ENCODE measurements at regions of chr17 and their contacts with region 1.

Region 1: GRCh38 chr17:55238179-55238930 is 26.4 kb upstream of the HLF start:
- DNase-seq: peak; percentile 85
- H3K4me3 Mint-ChIP-seq: peak overlapping the region; percentile 77
- H3K27ac Mint-ChIP-seq: no peak overlapping the region
- H3K4me1 Mint-ChIP-seq: peaks cover 9% of the 10 kb centered on the region
- H3K27me3 Mint-ChIP-seq: peaks cover 24% of the 10 kb centered on the region

Region 2: DNA sequence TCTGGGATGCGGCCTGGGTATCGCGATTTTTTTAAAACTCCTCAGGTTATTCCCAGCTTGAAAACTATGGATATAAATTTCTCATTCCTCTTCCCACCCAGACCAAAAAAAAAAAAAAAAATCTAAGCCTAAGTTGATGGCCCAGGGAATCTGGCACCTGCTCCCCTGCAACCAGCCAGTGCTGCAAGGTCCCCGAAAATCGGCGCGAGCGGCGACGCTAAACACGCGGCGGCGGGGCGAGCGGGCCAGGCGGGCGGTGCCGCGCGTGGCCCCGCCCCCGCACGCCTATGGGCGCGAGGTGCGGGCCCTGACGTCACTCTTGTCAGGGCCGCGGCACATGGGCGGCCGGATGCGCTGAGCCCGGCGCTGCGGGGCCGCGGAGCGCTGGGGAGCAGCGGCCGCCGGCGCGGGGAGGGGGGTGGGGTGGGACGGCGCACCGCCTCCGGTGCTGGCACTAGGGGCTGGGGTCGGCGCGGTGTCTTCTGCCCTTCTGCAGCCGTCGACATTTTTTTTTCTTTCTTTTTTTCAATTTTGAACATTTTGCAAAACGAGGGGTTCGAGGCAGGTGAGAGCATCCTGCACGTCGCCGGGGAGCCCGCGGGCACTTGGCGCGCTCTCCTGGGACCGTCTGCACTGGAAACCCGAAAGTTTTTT is 26.4 kb after region 1 on chr17 and contains the start of gene HLF:
- CTCF ChIA-PET with region 1: interaction called, 3 read pairs
- intact Hi-C with region 1: loop called (anchors 1 kb)
- DNase-seq: peak; percentile 68
- H3K4me3 Mint-ChIP-seq: peak within 1 kb of the TSS; percentile 48
- H3K27ac Mint-ChIP-seq: no peak within 1 kb of the TSS
- H3K4me1 Mint-ChIP-seq: peaks cover 13% of the 10 kb centered on the region
- H3K27me3 Mint-ChIP-seq: peaks cover 78% of the 10 kb centered on the region
- total RNA-seq, gene HLF: 0.79 to 0.86 TPM

Region 3: DNA sequence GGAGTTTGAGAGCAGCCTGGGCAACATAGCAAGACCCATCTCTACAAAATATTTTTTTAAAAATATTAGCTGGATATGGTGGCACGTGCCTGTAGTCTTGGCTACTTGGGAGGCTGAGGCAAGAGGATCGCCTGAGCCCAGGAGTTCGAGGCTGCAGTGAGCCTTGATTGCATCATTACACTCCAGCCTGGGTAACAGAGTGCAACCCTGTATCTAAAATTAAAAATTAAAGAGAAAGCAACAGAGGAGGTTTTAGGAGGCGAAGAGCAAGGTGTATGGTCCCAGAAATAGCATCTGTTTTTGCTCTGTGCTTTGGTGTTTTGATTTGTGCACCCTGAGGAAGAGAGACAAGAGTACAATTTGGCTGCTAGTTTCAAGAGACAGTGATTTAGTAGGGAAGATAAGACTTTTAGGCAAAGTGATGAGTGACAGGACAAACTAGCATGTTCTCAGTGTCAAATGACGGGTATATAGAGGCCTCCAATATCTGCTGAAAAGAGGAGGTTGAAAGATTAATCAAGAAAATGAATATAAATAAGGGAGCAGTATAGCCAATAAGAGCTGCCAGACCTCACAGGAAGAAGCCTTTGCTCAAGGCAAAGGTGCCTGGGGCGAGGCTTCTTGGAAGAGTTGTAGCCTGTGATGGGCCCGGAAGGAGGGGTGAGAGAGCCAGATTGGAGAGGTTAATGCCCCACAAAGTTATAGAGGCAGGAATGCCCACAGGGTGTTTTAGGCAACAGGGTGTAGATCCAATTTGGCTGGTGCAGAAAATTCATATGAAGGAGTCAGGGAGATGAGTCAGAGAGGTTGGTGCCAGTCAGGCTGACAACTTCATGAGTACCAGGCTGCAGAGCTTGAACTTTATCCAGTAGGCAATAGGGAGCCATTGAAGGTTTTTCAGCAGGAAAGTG is 37.8 kb after region 1 on chr17:
- CTCF ChIA-PET with region 1: no interaction called
- intact Hi-C with region 1: no loop called
- DNase-seq: no peak
- H3K4me3 Mint-ChIP-seq: no peak overlapping the region
- H3K27ac Mint-ChIP-seq: no peak overlapping the region
- H3K4me1 Mint-ChIP-seq: no peaks in the 10 kb centered on the region
- H3K27me3 Mint-ChIP-seq: peaks cover 23% of the 10 kb centered on the region

Region 4: DNA sequence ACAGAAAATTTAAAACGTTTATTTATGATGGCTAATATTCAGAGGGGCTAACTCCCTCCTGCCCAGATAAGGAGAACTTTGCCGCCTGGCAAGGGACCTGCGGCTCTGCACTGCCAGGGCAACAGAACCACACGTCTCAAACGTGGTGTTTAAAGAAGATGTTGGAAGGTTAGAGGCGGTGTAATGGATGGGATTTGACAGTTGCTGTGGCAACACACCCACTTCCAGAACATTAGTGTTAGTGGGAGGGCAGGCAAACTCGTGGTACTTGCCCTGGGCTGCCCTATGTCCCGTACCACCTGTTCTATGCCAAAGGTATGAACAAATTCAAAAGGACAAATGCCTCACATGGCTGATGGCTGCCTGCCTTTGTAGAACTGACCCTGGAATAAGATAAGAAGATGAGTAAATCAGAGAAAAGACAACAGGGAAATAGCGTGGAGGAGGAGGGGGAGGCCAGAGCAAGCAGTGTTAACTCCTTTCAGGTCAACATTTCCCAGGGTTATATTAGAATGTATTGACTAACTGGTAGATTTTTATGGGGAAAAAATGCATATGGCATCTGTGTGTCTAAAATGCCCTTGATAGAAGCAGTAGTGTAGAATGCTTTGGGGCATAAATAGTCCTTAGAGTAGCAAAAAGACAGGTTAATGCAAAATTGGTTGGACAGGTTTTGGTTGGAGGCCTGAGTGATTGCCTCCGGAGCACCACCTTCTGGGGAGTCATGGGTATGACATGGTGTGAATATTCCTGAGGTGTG is 57.2 kb after region 1 on chr17:
- CTCF ChIA-PET with region 1: interaction called, 4 read pairs
- intact Hi-C with region 1: loop called (anchors 2 kb)
- DNase-seq: peak; percentile 72
- H3K4me3 Mint-ChIP-seq: no peak overlapping the region
- H3K27ac Mint-ChIP-seq: no peak overlapping the region
- H3K4me1 Mint-ChIP-seq: no peaks in the 10 kb centered on the region
- H3K27me3 Mint-ChIP-seq: peaks cover 6% of the 10 kb centered on the region

Region 5: DNA sequence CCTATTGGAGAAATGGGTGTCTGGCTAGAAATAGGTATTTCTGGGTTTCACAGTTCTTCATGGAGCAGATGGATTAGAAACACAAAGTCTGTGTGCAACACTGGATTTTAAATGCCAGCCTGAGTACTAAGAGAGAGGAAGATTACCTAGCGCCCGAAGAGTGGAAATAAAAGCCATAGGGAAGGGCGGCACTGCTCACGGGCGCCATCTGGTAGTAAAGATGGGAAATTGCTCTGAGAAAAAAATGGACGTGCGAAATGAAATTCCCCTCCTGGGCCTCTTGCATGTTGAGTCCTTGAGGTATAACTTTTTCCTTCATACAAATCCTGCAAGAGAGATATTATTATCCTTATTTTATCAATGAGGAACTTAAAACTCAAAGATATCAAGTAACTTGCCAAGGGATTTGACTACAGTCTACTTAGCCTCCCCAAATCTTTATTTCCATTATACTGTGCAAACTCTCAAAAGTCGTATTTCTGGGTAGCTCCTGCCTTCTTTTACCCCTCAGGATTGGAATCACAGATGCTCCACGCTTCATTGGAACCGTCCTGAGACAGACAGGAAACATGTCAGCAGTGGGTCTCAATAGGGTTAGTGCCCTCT is 110.5 kb after region 1 on chr17:
- CTCF ChIA-PET with region 1: no interaction called
- intact Hi-C with region 1: loop called (anchors 2 kb)
- DNase-seq: peak; percentile 54
- H3K4me3 Mint-ChIP-seq: no peak overlapping the region
- H3K27ac Mint-ChIP-seq: no peak overlapping the region
- H3K4me1 Mint-ChIP-seq: peaks cover 4% of the 10 kb centered on the region
- H3K27me3 Mint-ChIP-seq: peaks cover 2% of the 10 kb centered on the region

Measured in activated naive CD4-positive, alpha-beta T cell treated with anti-CD3 and anti-CD28 coated beads for 36 hours (primary cell).